Endothelial cell of umbilical vein (primary cell): ENCODE measurements at regions of chr4 and their contacts with region 1.

Region 1: DNA sequence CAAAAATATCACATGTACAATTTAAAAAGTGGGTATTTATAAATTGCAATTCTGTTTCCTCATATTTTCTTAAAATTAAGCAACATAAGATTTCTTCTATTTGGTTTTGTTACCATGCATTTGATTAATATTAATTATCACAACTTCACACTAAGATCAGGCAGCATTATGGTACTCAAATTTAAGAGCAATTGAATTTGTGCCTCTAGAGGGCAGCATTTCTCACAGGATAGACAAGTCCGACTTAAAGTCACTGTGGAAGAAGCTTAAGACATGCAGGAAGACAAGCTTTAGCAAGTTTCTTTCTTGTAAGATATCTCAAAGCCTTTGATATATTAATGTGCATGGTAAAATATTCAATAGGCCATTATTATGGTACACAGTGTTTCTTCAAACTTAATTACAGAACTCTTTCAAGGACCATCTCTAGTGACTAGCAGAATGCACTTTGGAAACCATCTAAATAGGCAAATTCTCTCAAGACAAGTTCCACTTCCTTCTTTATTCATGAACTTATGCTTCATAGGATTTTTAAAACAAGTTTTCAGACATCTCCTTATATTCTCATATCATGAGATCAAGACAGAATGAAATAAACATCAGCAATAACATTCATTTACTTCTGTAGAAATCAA is 35.0 kb downstream of the FBXW7 start:
- DNase-seq: peak; percentile 84
- H3K4me3 ChIP-seq: no peak overlapping the region
- H3K27ac ChIP-seq: no peak overlapping the region
- H3K4me1 ChIP-seq: peaks cover 6% of the 10 kb centered on the region
- H3K27me3 ChIP-seq: no peaks in the 10 kb centered on the region
- CTCF ChIP-seq: peak; percentile 54 to 57
- POLR2A ChIP-seq: no peak

Region 2: DNA sequence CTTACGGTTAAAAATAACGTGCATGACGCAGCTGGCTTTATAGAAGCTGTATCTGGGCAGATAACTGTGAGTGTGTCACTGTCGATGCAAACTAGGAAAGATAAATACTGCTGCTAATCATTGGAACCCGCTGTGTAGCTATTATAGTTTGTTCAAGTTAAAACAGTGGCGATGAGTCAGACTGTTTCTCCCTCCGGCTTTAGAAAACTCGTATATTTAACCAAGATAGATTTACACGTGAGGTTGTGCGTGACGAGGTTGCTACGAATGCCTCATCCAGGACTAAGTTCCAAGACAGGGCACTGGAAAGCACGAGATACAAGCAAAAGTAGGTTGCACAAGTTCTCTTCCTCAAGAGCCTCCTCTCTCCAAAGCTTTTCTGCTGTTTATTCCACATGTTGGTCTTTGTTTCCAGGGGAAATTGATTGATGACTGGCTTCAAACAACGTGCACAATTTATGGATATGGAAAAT is 235.7 kb before region 1 on chr4:
- CTCF ChIA-PET with region 1: no interaction called
- POLR2A ChIA-PET with region 1: no interaction called
- dilution Hi-C with region 1: no loop called
- intact Hi-C with region 1: no loop called
- DNase-seq: no peak
- H3K4me3 ChIP-seq: no peak overlapping the region
- H3K27ac ChIP-seq: no peak overlapping the region
- H3K4me1 ChIP-seq: peaks cover 8% of the 10 kb centered on the region
- H3K27me3 ChIP-seq: no peaks in the 10 kb centered on the region
- CTCF ChIP-seq: no peak
- POLR2A ChIP-seq: no peak

Region 3: GRCh38 chr4:152454398-152455011 is 46.4 kb before region 1 on chr4:
- CTCF ChIA-PET with region 1: interaction called, 63 read pairs
- POLR2A ChIA-PET with region 1: no interaction called
- dilution Hi-C with region 1: no loop called
- intact Hi-C with region 1: no loop called
- DNase-seq: peak; percentile 38
- H3K4me3 ChIP-seq: no peak overlapping the region
- H3K27ac ChIP-seq: no peak overlapping the region
- H3K4me1 ChIP-seq: no peaks in the 10 kb centered on the region
- H3K27me3 ChIP-seq: no peaks in the 10 kb centered on the region
- CTCF ChIP-seq: peak; percentile 30 to 35
- POLR2A ChIP-seq: no peak

Region 4: GRCh38 chr4:152485726-152486276 is 15.1 kb before region 1 on chr4:
- CTCF ChIA-PET with region 1: interaction called, 65 read pairs
- POLR2A ChIA-PET with region 1: no interaction called
- dilution Hi-C with region 1: no loop called
- intact Hi-C with region 1: no loop called
- DNase-seq: no peak
- H3K4me3 ChIP-seq: no peak overlapping the region
- H3K27ac ChIP-seq: no peak overlapping the region
- H3K4me1 ChIP-seq: no peaks in the 10 kb centered on the region
- H3K27me3 ChIP-seq: no peaks in the 10 kb centered on the region
- CTCF ChIP-seq: no peak
- POLR2A ChIP-seq: no peak

Region 5: GRCh38 chr4:152535903-152536544 is 35.1 kb after region 1 on chr4 and contains the start of gene FBXW7:
- CTCF ChIA-PET with region 1: interaction called, 107 read pairs
- POLR2A ChIA-PET with region 1: interaction called, 5 read pairs
- dilution Hi-C with region 1: no loop called
- intact Hi-C with region 1: loop called (anchors 5 kb)
- DNase-seq: peak; percentile 99
- H3K4me3 ChIP-seq: peak within 1 kb of the TSS; percentile 82 to 91 (median 82)
- H3K27ac ChIP-seq: peak within 1 kb of the TSS; percentile 70
- H3K4me1 ChIP-seq: peaks cover 21% of the 10 kb centered on the region
- H3K27me3 ChIP-seq: no peaks in the 10 kb centered on the region
- CTCF ChIP-seq: no peak
- POLR2A ChIP-seq: peak; percentile 60
- total RNA-seq, gene FBXW7: 27.9 and 28.1 TPM in 2 replicates

Region 6: GRCh38 chr4:152613841-152614721 is 113.2 kb after region 1 on chr4:
- CTCF ChIA-PET with region 1: interaction called, 19 read pairs
- POLR2A ChIA-PET with region 1: no interaction called
- dilution Hi-C with region 1: no loop called
- intact Hi-C with region 1: no loop called
- DNase-seq: no peak
- H3K4me3 ChIP-seq: no peak overlapping the region
- H3K27ac ChIP-seq: no peak overlapping the region
- H3K4me1 ChIP-seq: no peaks in the 10 kb centered on the region
- H3K27me3 ChIP-seq: peaks cover 3 to 25% of the 10 kb centered on the region in 2 experiments
- CTCF ChIP-seq: no peak
- POLR2A ChIP-seq: no peak

Region 7: DNA sequence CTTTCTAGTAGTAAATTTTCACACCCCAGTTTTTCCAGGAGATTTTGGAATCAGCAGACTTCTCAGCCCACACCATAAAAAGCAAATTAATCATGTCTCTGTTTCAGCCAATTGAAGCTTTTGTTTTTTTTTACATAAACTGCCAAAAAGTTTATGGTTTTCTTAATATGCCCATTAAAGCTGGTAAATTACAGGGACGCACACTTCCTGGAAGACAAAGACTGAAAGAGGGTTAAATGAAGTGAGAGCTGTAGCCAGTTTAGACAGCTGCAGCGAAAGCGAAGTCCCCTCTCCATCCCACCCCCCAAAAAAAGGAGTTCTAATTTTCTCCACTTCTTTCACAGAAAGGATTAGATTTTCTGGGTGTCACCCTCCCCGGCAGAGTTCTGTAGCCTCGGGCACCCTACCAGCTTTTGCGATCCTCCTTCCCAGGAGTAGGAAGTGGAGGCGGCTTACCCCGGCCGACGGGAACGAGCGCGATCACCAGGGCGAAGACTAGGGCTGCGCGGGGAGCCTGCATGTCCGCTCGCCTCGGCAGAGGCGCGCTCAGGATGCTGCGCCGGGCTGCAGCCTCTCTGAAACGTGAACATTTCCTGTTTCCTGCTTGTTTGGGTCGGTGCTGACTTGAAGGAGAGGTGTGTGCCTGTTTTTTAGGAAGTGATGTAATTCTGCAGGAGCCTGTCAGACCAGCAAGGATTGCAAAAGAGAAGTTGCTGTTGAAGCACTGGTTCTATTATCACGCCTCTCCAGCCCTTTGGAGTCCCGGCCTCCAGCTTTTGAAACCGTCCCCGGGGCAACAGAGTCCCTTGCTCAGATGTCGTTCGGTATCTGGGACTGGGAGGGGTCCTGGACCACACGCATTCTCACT is 178.7 kb after region 1 on chr4 and contains the start of gene TMEM154:
- CTCF ChIA-PET with region 1: interaction called, 23 read pairs
- POLR2A ChIA-PET with region 1: interaction called, 3 read pairs
- dilution Hi-C with region 1: no loop called
- intact Hi-C with region 1: loop called (anchors 5 kb)
- DNase-seq: peak; percentile 75
- H3K4me3 ChIP-seq: peak within 1 kb of the TSS; percentile 49 to 93 (median 83)
- H3K27ac ChIP-seq: peak within 1 kb of the TSS; percentile 85
- H3K4me1 ChIP-seq: peaks cover 44% of the 10 kb centered on the region
- H3K27me3 ChIP-seq: no peaks in the 10 kb centered on the region
- CTCF ChIP-seq: no peak
- POLR2A ChIP-seq: peak; percentile 84
- total RNA-seq, gene TMEM154: 43.6 and 50.0 TPM in 2 replicates

Region 8: GRCh38 chr4:152785639-152786615 is 285.0 kb after region 1 on chr4:
- CTCF ChIA-PET with region 1: no interaction called
- POLR2A ChIA-PET with region 1: no interaction called
- dilution Hi-C with region 1: no loop called
- intact Hi-C with region 1: no loop called
- DNase-seq: no peak
- H3K4me3 ChIP-seq: no peak overlapping the region
- H3K27ac ChIP-seq: no peak overlapping the region
- H3K4me1 ChIP-seq: peaks cover 13% of the 10 kb centered on the region
- H3K27me3 ChIP-seq: no peaks in the 10 kb centered on the region
- CTCF ChIP-seq: no peak
- POLR2A ChIP-seq: no peak